ENCODE measurements at regions of chr4 and their contacts with region 1.

Region 1: GRCh38 chr4:113952452-113953029 is 26.9 kb downstream of the ARSJ start:
- DNase-seq: peak; percentile 54
- ATAC-seq: peak; percentile 99
- H3K4me3 ChIP-seq: no peak overlapping the region
- H3K27ac ChIP-seq: no peak overlapping the region
- H3K4me1 ChIP-seq: no peaks in the 10 kb centered on the region
- H3K27me3 ChIP-seq: no peaks in the 10 kb centered on the region
- CTCF ChIP-seq: peak; percentile 84
- EP300 ChIP-seq: no peak
- POLR2A ChIP-seq: no peak
- RAD21 ChIP-seq: peak; percentile 66

Region 2: GRCh38 chr4:113901994-113902787 is 50.4 kb before region 1 on chr4:
- CTCF ChIA-PET with region 1: no interaction called
- POLR2A ChIA-PET with region 1: no interaction called
- in situ Hi-C with region 1: no loop called
- intact Hi-C with region 1: no loop called
- DNase-seq: peak; percentile 34
- ATAC-seq: peak; percentile 100
- H3K4me3 ChIP-seq: peak overlapping the region in 1 of 3 experiments; percentile 38; a peak in 1 of 6 replicates
- H3K27ac ChIP-seq: no peak overlapping the region
- H3K4me1 ChIP-seq: peaks cover 11% of the 10 kb centered on the region
- H3K27me3 ChIP-seq: no peaks in the 10 kb centered on the region; a peak in 1 of 5 replicates
- CTCF ChIP-seq: peak; percentile 57
- EP300 ChIP-seq: no peak
- POLR2A ChIP-seq: no peak
- RAD21 ChIP-seq: no peak

Region 3: DNA sequence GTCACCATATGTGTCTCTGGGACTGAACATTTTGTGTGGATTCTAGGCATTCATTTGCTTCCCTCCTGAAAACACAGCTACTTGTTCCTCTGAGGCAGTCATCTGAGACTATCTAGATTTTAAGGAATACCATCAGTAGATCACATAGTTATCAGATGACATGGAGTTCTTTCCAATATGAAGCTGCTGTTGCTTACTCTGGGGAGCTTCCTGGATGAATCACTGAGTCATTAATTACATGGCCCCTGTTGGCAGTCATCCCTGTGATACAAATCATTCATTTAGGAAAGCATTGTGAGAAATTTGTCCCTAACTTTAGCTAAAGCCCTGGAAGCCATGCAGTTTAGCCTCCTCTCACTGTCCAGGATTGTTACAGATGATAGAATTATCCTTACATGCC is 125.1 kb after region 1 on chr4:
- CTCF ChIA-PET with region 1: no interaction called
- POLR2A ChIA-PET with region 1: no interaction called
- in situ Hi-C with region 1: loop called (anchors 10 kb)
- intact Hi-C with region 1: no loop called
- DNase-seq: no peak
- ATAC-seq: no peak
- H3K4me3 ChIP-seq: no peak overlapping the region
- H3K27ac ChIP-seq: no peak overlapping the region
- H3K4me1 ChIP-seq: no peaks in the 10 kb centered on the region
- H3K27me3 ChIP-seq: no peaks in the 10 kb centered on the region
- CTCF ChIP-seq: no peak
- EP300 ChIP-seq: no peak
- POLR2A ChIP-seq: no peak
- RAD21 ChIP-seq: no peak

Region 4: GRCh38 chr4:114180481-114180880 is 227.9 kb after region 1 on chr4:
- CTCF ChIA-PET with region 1: interaction called, 6 read pairs
- POLR2A ChIA-PET with region 1: no interaction called
- in situ Hi-C with region 1: loop called (anchors 10 kb)
- intact Hi-C with region 1: no loop called
- DNase-seq: peak; percentile 25
- ATAC-seq: peak; percentile 95
- H3K4me3 ChIP-seq: no peak overlapping the region
- H3K27ac ChIP-seq: no peak overlapping the region
- H3K4me1 ChIP-seq: no peaks in the 10 kb centered on the region
- H3K27me3 ChIP-seq: no peaks in the 10 kb centered on the region
- CTCF ChIP-seq: peak; percentile 69
- EP300 ChIP-seq: no peak
- POLR2A ChIP-seq: no peak
- RAD21 ChIP-seq: peak; percentile 53

Region 5: GRCh38 chr4:114378306-114378903 is 425.9 kb after region 1 on chr4:
- CTCF ChIA-PET with region 1: interaction called, 3 read pairs
- POLR2A ChIA-PET with region 1: no interaction called
- in situ Hi-C with region 1: loop called (anchors 10 kb)
- intact Hi-C with region 1: loop called (anchors 2 kb)
- DNase-seq: no peak
- ATAC-seq: no peak
- H3K4me3 ChIP-seq: no peak overlapping the region
- H3K27ac ChIP-seq: no peak overlapping the region
- H3K4me1 ChIP-seq: no peaks in the 10 kb centered on the region
- H3K27me3 ChIP-seq: no peaks in the 10 kb centered on the region
- CTCF ChIP-seq: peak; percentile 41
- EP300 ChIP-seq: no peak
- POLR2A ChIP-seq: no peak
- RAD21 ChIP-seq: no peak

Measured in HepG2 (cell line).